ENCODE measurements at regions of chr17 and their contacts with region 1.

Region 1: GRCh38 chr17:47315451-47316266 is 8.1 kb upstream of the EFCAB13 start:
- DNase-seq: peak; percentile 99
- ATAC-seq: peak; percentile 86
- H3K4me3 ChIP-seq: no peak overlapping the region
- H3K27ac ChIP-seq: peak overlapping the region; percentile 95
- H3K4me1 ChIP-seq: peaks cover 13% of the 10 kb centered on the region
- H3K27me3 ChIP-seq: no peaks in the 10 kb centered on the region
- CTCF ChIP-seq: peak; percentile 92
- POLR2A ChIP-seq: 0 out of 2 replicates have a peak, but pooled peaks have one; percentile 28
- RAD21 ChIP-seq: peak; percentile 98

Region 2: GRCh38 chr17:47188876-47189731 is 126.6 kb before region 1 on chr17 and contains the start of gene CDC27:
- CTCF ChIA-PET with region 1: no interaction called
- POLR2A ChIA-PET with region 1: no interaction called
- dilution Hi-C with region 1: no loop called
- in situ Hi-C with region 1: no loop called
- intact Hi-C with region 1: loop called (anchors 5 kb)
- DNase-seq: peak; percentile 97
- ATAC-seq: peak; percentile 96
- H3K4me3 ChIP-seq: peak within 1 kb of the TSS; percentile 75
- H3K27ac ChIP-seq: peak within 1 kb of the TSS; percentile 92
- H3K4me1 ChIP-seq: peaks cover 3% of the 10 kb centered on the region
- H3K27me3 ChIP-seq: no peaks in the 10 kb centered on the region
- CTCF ChIP-seq: no peak
- POLR2A ChIP-seq: peak; percentile 57; the same call in 1 of the 2 replicates
- RAD21 ChIP-seq: no peak
- total RNA-seq, gene CDC27: 170 and 190 TPM in 2 replicates

Region 3: DNA sequence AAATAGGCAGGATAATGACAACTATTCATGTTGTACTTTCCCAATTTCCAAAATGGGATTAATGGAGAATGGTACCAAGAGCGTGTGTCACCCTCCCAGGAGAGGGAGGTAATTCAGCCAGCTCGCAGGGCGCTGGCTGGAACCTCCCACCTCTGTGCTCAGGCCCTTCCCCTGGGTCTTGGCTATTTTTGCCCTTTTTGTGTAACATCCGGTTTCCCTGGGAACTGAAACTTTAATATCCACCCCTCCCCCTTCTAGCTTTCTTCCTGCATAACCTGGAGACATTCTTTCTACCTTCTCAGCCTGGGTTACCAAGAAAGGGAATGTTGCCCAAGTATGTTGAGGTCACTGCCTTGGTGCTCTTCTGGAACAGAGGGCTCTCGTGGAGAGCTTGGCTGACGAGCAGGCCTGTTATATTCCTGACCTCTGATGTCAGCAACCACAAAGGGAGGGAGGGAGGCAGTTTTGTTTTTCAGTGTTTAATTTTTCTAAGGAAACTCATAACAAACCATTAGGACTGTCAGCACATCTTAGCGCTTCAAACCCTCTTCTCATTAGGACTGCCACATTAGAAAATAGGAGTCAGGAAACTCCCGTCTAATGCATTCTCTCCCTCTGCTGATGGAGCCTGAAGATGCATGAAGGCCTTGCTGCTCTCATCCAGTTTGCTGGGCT is 36.5 kb before region 1 on chr17:
- CTCF ChIA-PET with region 1: no interaction called
- POLR2A ChIA-PET with region 1: interaction called, 5 read pairs
- dilution Hi-C with region 1: no loop called
- in situ Hi-C with region 1: no loop called
- intact Hi-C with region 1: loop called (anchors 2 kb)
- DNase-seq: peak; percentile 97
- ATAC-seq: peak; percentile 79
- H3K4me3 ChIP-seq: no peak overlapping the region
- H3K27ac ChIP-seq: peak overlapping the region; percentile 84
- H3K4me1 ChIP-seq: peaks cover 51% of the 10 kb centered on the region
- H3K27me3 ChIP-seq: no peaks in the 10 kb centered on the region
- CTCF ChIP-seq: peak; percentile 31; the same call in 1 of the 2 replicates
- POLR2A ChIP-seq: no peak; the same call in 1 of the 2 replicates
- RAD21 ChIP-seq: peak; percentile 34

Measured in IMR-90 (cell line).